Sigmoid colon (tissue), 7 donors: ENCODE measurements at regions of chr1 and their contacts with region 1.

Region 1: GRCh38 chr1:192914696-192915095 is 105.9 kb downstream of the RGS2 start:
- DNase-seq: no peak
- H3K4me3 ChIP-seq: no peak overlapping the region
- H3K27ac ChIP-seq: peak overlapping the region; percentile 64 to 73 (median 67)
- H3K4me1 ChIP-seq: peaks cover 0 to 35% (median 27%) of the 10 kb centered on the region in 4 donors
- H3K27me3 ChIP-seq: no peaks in the 10 kb centered on the region
- CTCF ChIP-seq: no peak
- EP300 ChIP-seq: no peak
- POLR2A ChIP-seq: no peak

Region 2: DNA sequence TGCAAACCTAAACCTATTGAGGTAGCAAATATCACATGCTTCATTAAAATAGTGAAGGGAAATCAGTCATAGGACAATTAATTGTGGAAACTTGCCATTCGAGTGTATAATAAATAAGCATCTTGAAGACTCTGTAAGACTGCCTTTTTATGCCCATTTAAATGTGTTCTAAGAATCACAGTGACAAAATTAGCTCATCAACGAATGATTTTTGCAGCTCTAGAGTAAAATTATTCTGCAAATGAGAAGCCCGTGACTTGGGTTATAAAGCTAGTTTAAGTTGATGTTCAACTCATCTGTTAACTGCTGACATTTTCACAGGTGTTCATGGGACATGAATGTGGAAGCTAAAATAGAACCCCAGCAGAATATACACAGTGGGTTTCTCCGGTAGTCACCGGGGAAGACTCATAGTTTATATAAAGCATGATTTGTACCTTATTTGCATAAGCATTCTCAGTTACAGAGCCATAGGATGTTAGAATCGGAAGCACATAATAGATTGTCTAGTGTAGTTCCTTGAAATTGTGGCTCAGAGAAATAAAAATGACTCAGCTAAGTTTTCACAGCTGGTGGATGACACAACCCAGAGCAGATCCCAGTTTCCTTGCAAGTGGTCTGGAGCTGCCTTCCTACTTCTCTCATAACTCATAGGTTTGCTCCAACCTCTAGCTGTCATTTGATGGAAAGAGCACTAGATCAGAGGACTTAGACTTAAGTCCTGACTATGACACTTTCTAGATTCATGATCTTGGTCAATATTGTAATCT is 37.2 kb after region 1 on chr1:
- intact Hi-C with region 1: loop called (anchors 5 kb)
- DNase-seq: peak; percentile 74
- H3K4me3 ChIP-seq: no peak overlapping the region
- H3K27ac ChIP-seq: peak overlapping the region in 3 of 4 donors; percentile 50 to 70 (median 54)
- H3K4me1 ChIP-seq: peaks cover 0 to 24% (median 20%) of the 10 kb centered on the region in 4 donors
- H3K27me3 ChIP-seq: no peaks in the 10 kb centered on the region
- CTCF ChIP-seq: no peak
- EP300 ChIP-seq: peak in 1 of 4 donors; percentile 41
- POLR2A ChIP-seq: no peak

Region 3: DNA sequence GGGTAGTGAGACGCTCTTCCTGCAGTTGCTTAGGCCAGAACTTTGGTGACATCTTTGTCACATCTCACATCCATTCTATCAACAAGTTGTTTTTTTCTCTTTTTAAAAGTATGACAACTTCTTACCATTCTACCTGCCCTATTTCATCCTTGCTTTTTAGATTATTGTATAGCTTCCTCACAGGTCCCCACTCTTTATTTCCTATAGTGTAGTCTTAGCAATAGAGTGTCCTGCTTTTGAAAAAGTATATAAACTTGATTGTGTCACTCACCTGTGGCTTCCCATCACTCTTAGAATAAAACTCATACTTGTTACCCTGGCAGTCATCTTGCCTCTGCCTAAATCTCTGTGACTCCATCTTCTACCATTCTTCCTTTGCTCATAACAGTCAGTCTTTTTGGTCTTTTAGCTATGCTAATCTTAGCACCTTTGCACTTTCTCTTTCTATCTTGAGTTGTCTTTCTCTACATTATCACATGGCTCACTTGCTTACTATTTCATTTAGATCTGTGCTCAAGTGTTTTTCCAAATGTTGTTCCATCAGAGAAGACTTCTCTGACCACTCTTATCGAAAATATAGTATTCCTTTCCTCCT is 216.7 kb after region 1 on chr1:
- intact Hi-C with region 1: no loop called
- DNase-seq: no peak
- H3K4me3 ChIP-seq: no peak overlapping the region
- H3K27ac ChIP-seq: no peak overlapping the region
- H3K4me1 ChIP-seq: peaks cover 0 to 16% (median 4%) of the 10 kb centered on the region in 4 donors
- H3K27me3 ChIP-seq: no peaks in the 10 kb centered on the region
- CTCF ChIP-seq: no peak
- EP300 ChIP-seq: no peak
- POLR2A ChIP-seq: no peak